Breast epithelium (tissue), 4 donors: ENCODE measurements at regions of chr9 and their contacts with region 1.

Region 1: DNA sequence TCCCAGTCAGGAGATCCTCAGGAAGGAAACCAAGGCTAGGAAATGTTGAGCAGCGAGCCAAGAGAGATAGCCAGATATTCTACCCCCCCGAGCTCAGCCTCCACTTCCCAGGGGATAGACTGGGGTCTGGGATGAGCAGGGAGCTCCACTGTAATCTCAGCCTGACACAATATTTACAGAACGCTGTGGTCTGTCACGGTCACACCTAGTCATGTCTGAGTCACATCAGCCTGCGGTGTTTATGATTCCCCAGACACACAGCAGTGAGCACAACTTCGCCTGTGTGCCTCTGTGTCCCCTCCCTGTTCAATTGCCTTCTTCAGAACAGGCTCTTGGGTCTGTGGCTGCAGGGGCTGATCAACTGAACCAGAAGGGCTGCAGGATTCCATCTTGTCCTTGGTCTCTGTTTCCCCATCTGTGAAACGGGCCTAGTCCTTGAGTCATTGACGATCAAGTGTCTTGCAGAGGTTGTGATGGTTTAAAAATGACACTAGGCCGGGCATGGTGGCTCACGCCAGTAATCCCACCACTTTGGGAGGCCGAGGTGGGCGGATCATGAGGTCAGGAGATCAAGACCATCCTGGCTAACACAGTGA is 8.6 kb upstream of the PRRX2 start:
- DNase-seq: no peak
- H3K4me3 ChIP-seq: no peak overlapping the region
- H3K27ac ChIP-seq: no peak overlapping the region
- H3K4me1 ChIP-seq: no peaks in the 10 kb centered on the region
- H3K27me3 ChIP-seq: no peaks in the 10 kb centered on the region
- CTCF ChIP-seq: no peak
- POLR2A ChIP-seq: no peak

Region 2: GRCh38 chr9:130663258-130663976 is 1006.5 kb after region 1 on chr9:
- intact Hi-C with region 1: loop called (anchors 5 kb)
- DNase-seq: no peak
- H3K4me3 ChIP-seq: peak overlapping the region in 2 of 3 donors; percentile 20 to 56
- H3K27ac ChIP-seq: no peak overlapping the region
- H3K4me1 ChIP-seq: peaks cover 22 to 34% of the 10 kb centered on the region in 2 donors
- H3K27me3 ChIP-seq: peaks cover 30 to 100% of the 10 kb centered on the region in 2 donors
- CTCF ChIP-seq: no peak
- POLR2A ChIP-seq: no peak